Sciatic nerve (tissue), 2 donors: ENCODE measurements at regions of chr2 and their contacts with region 1.

Region 1: DNA sequence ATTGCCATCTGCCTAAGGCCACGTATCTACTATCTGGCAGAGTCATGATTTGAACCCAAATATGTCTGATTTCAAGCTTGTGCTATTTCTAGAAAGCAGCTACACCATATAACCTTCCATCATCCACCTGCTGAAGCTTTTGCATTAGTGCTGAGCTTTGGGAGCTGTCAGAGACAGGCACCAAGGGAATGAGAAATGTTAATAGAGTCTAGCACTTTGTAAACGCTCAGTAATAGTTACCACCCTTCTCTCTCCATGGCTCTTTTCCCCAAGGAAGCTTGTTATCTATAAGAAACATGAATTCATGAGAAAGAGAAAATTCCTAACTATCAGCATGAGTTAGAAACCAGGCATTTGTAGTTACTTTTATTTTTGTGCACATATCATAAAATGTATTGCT is 151.5 kb downstream of the CPS1 start:
- DNase-seq: no peak
- ATAC-seq: no peak

Region 2: DNA sequence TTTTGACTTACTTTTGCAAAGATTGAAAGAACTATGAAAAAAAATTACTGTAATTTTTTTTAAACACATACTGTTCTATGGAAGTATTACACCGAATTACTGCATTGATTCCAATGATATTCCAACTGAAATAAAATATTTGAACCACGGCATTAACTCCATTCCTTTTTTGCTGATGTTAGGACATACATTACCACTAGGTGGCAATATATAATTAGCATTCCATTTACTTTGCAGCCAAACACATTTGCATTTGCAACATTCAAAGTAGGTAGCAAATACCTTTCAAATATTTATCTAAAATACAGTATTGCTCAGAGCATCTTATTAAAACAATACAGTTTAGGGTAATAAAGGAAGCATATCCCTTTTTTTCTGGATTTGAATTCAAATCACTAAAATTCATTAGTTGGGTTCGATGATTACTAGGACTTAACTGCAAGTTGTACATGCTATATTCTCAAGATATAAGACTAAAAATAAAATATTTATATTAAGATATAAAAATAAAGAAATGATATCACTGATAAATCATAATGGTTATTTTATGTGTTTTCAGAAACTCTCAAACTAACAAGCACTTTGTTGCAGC is 262.7 kb before region 1 on chr2:
- intact Hi-C with region 1: no loop called
- DNase-seq: no peak
- ATAC-seq: no peak

Region 3: DNA sequence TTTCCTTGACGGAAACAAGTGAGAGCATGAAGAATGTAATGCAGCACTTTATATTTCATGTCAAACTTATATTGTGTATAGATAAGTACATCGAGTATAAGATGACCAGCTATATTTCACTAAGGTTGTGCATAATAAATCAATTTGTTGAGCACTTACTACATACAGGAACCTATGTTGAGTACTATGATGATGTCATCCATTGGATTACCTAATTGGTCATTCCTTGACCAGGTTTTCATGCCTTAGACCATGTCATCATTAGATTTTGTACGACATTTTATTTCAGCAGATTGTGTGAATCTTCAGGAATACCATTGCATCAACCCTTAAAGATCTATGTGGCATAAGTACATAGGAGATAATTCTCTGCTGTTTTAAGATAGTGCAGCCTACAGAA is 31.8 kb before region 1 on chr2:
- intact Hi-C with region 1: loop called (anchors 2 kb)
- DNase-seq: no peak
- ATAC-seq: no peak